B cell (primary cell): ENCODE measurements at regions of chr15 and their contacts with region 1.

Region 1: DNA sequence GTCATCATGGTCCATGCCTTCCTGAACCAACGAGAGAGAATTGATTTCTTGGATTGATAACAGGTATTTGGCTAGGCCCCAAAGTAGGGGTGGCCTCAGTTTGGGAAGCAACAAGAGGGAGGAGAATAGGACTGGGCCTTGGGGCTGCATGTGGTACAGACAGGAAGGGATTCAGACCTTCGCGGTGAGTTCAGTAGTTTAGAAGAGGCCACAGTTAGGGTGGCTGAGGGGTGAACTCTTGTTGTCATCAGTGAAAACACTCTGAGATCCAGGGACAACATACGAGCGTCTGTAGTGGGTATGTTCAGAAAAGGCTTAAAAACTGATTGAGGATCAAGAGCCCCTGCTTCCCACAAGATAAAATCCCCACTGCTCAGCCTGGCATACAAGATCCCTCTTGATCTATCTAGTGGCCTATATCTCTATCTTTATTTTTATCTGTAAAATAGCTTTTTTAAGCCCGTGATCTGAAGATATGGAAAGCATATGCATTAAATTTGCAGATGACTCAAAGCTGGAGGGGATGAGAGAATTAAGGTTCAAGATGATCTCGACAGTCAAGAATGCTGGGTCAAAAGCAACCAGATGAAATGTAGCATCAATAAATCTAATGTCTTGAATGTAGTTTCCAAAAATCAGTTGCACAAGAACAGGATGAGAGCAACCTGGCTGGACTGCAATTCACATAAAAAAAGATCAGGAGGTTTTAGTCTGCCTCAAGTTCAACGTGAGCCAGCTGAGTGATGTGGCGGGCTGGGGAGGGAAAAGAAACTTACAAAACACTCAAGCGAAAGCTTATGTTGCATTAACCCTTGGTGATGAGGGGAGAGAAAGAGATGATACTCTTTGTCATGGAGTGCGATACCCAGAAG is 221.1 kb upstream of the TLE3 start:
- DNase-seq: peak; percentile 40
- ATAC-seq: peak; percentile 37
- H3K4me3 ChIP-seq: peak overlapping the region in 3 of 5 experiments; percentile 24 to 34 (median 28)
- H3K4me3 Mint-ChIP-seq: peak overlapping the region; percentile 79
- H3K27ac ChIP-seq: peak overlapping the region; percentile 86 to 97
- H3K27ac Mint-ChIP-seq: peak overlapping the region; percentile 91
- H3K4me1 ChIP-seq: peaks cover 58 to 68% of the 10 kb centered on the region in 2 donors
- H3K4me1 Mint-ChIP-seq: peaks cover 61% of the 10 kb centered on the region
- H3K27me3 ChIP-seq: no peaks in the 10 kb centered on the region
- H3K27me3 Mint-ChIP-seq: no peaks in the 10 kb centered on the region
- CTCF ChIP-seq: no peak

Region 2: GRCh38 chr15:69760890-69761568 is 557.8 kb before region 1 on chr15:
- CTCF ChIA-PET with region 1: no interaction called
- POLR2A ChIA-PET with region 1: no interaction called
- intact Hi-C with region 1: loop called (anchors 2 kb)
- DNase-seq: peak; percentile 63
- ATAC-seq: peak; percentile 80
- H3K4me3 ChIP-seq: no peak overlapping the region
- H3K4me3 Mint-ChIP-seq: peak overlapping the region; percentile 76
- H3K27ac ChIP-seq: no peak overlapping the region
- H3K27ac Mint-ChIP-seq: peak overlapping the region; percentile 81
- H3K4me1 ChIP-seq: peaks cover 65 to 68% of the 10 kb centered on the region in 2 donors
- H3K4me1 Mint-ChIP-seq: peaks cover 69% of the 10 kb centered on the region
- H3K27me3 ChIP-seq: no peaks in the 10 kb centered on the region
- H3K27me3 Mint-ChIP-seq: peaks cover 3% of the 10 kb centered on the region
- CTCF ChIP-seq: no peak

Region 3: DNA sequence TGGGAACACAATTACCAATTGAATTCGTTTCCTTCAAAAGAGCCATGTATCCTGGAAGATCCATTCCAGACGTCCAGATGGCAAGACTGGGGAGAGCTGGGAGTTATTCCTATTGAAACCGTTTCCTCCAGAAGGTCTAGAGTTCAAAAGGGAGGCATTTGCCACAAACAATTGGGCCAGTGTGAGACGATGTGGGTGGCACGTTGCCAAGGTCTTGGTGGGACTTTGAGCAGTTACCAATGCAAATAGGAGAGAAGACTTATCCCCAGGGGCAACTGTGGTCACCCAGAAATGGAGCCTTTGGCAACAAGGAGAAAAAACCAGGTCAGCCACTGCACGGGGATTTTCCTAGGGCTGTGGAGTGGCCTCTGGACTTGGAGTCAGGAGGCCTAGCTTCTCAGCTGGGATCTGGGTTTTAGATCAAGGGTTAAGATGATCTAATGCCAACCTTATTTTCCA is 191.5 kb before region 1 on chr15:
- CTCF ChIA-PET with region 1: no interaction called
- POLR2A ChIA-PET with region 1: no interaction called
- intact Hi-C with region 1: no loop called
- DNase-seq: no peak
- ATAC-seq: no peak
- H3K4me3 ChIP-seq: no peak overlapping the region
- H3K4me3 Mint-ChIP-seq: no peak overlapping the region
- H3K27ac ChIP-seq: no peak overlapping the region
- H3K27ac Mint-ChIP-seq: no peak overlapping the region
- H3K4me1 ChIP-seq: no peaks in the 10 kb centered on the region
- H3K4me1 Mint-ChIP-seq: peaks cover 3% of the 10 kb centered on the region
- H3K27me3 ChIP-seq: peaks cover 0 to 13% (median 5%) of the 10 kb centered on the region in 4 experiments
- H3K27me3 Mint-ChIP-seq: peaks cover 27% of the 10 kb centered on the region
- CTCF ChIP-seq: no peak

Region 4: GRCh38 chr15:70259028-70259424 is 59.8 kb before region 1 on chr15:
- CTCF ChIA-PET with region 1: interaction called, 9 read pairs
- POLR2A ChIA-PET with region 1: interaction called, 6 read pairs
- intact Hi-C with region 1: loop called (anchors 2 kb)
- DNase-seq: peak; percentile 79
- ATAC-seq: peak; percentile 41
- H3K4me3 ChIP-seq: peak overlapping the region in 4 of 5 experiments; percentile 11 to 36 (median 26)
- H3K4me3 Mint-ChIP-seq: peak overlapping the region; percentile 81
- H3K27ac ChIP-seq: peak overlapping the region; percentile 16 to 53
- H3K27ac Mint-ChIP-seq: peak overlapping the region; percentile 85
- H3K4me1 ChIP-seq: peaks cover 54 to 63% of the 10 kb centered on the region in 2 donors
- H3K4me1 Mint-ChIP-seq: peaks cover 63% of the 10 kb centered on the region
- H3K27me3 ChIP-seq: no peaks in the 10 kb centered on the region
- H3K27me3 Mint-ChIP-seq: no peaks in the 10 kb centered on the region
- CTCF ChIP-seq: no peak

Region 5: DNA sequence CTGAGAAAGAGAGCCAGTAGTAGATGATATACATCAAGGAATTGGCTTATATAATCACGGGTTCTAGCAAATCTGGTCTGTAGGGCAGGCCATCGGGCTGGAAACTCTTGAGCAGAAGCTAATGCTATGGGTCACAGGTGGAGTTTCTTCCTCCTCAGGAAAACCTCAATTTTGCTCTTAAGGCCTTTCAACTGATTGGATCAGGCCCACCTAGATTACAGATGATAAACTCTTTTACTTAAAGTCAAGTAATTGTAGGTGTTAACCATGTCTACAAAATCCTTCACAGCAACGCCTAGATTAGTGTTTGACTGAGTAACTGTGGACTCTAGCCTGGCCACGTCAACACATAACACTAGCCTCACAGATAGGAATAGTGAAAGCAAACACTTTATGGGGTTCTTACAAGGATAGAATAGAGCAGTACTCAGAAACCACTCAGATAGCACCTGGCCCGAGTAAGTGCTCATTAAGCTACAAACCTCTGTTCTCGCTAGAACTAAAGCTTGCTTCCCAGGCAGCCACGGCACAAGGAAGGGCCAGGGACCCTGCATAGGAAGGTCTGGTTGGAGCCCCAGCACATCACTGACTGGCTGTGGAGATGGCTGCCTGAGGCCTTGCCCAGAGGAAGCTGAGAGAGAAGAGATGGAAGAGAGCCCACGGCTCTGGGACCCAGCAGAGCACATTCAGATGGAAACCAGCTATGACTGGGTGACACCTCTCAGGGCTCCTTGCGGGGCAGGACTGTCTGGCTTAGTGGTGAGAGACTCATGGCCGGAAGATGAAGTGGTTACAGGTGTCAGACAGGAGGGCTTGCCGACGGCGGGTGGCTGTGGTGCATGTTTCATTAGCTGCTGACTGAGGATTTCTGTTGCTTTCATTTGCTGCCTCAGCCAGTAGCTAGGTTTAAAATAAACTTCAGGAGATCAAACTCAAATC is 18.6 kb before region 1 on chr15:
- CTCF ChIA-PET with region 1: interaction called, 5 read pairs
- POLR2A ChIA-PET with region 1: interaction called, 12 read pairs
- intact Hi-C with region 1: no loop called
- DNase-seq: peak; percentile 72
- ATAC-seq: peak; percentile 98
- H3K4me3 ChIP-seq: no peak overlapping the region
- H3K4me3 Mint-ChIP-seq: peak overlapping the region; percentile 33
- H3K27ac ChIP-seq: no peak overlapping the region
- H3K27ac Mint-ChIP-seq: peak overlapping the region; percentile 66
- H3K4me1 ChIP-seq: peaks cover 12 to 19% of the 10 kb centered on the region in 2 donors
- H3K4me1 Mint-ChIP-seq: peaks cover 17% of the 10 kb centered on the region
- H3K27me3 ChIP-seq: no peaks in the 10 kb centered on the region
- H3K27me3 Mint-ChIP-seq: no peaks in the 10 kb centered on the region
- CTCF ChIP-seq: no peak

Region 6: GRCh38 chr15:70387081-70387480 is 68.3 kb after region 1 on chr15:
- CTCF ChIA-PET with region 1: interaction called, 3 read pairs
- POLR2A ChIA-PET with region 1: interaction called, 3 read pairs
- intact Hi-C with region 1: loop called (anchors 2 kb)
- DNase-seq: no peak
- ATAC-seq: no peak
- H3K4me3 ChIP-seq: no peak overlapping the region
- H3K4me3 Mint-ChIP-seq: no peak overlapping the region
- H3K27ac ChIP-seq: peak overlapping the region in 1 of 2 donors; percentile 30
- H3K27ac Mint-ChIP-seq: no peak overlapping the region
- H3K4me1 ChIP-seq: peaks cover 20 to 22% of the 10 kb centered on the region in 2 donors
- H3K4me1 Mint-ChIP-seq: peaks cover 20% of the 10 kb centered on the region
- H3K27me3 ChIP-seq: no peaks in the 10 kb centered on the region
- H3K27me3 Mint-ChIP-seq: no peaks in the 10 kb centered on the region
- CTCF ChIP-seq: no peak

Region 7: DNA sequence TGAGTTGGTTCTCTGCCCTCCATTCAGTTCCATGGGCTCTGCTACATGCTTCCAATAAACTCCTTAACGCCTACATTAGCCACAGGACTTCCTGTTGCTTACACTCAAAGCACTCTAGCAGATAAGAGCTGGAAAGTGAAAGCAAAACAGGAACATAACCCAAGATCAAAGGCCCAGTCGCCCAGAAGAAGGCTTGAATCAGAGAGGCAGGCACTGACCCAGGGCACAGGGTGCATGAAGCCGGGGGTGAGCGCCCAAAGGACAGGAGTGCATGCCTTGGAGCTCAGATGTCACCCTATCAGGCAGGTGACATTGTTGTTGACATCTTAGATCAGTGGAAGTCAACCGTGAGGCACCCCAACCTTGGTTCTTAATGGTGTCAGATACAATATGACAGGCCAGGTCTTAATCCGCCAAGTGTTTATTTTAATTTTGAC is 209.5 kb after region 1 on chr15:
- CTCF ChIA-PET with region 1: no interaction called
- POLR2A ChIA-PET with region 1: no interaction called
- intact Hi-C with region 1: loop called (anchors 5 kb)
- DNase-seq: peak; percentile 77
- ATAC-seq: peak; percentile 61
- H3K4me3 ChIP-seq: peak overlapping the region in 2 of 5 experiments; percentile 10 to 51
- H3K4me3 Mint-ChIP-seq: peak overlapping the region; percentile 70
- H3K27ac ChIP-seq: peak overlapping the region; percentile 54 to 78
- H3K27ac Mint-ChIP-seq: peak overlapping the region; percentile 88
- H3K4me1 ChIP-seq: peaks cover 36 to 42% of the 10 kb centered on the region in 2 donors
- H3K4me1 Mint-ChIP-seq: peaks cover 49% of the 10 kb centered on the region
- H3K27me3 ChIP-seq: peaks cover 0 to under 1% (median 0%) of the 10 kb centered on the region in 4 experiments
- H3K27me3 Mint-ChIP-seq: peaks cover 7% of the 10 kb centered on the region
- CTCF ChIP-seq: no peak